Left ventricle myocardium inferior (tissue), 1 donor: ENCODE measurements at regions of chr10 and their contacts with region 1.

Region 1: GRCh38 chr10:70925377-70926225 is 37.2 kb upstream of the PCBD1 start:
- DNase-seq: peak; percentile 49
- H3K4me3 ChIP-seq: no peak overlapping the region
- H3K27ac ChIP-seq: peak overlapping the region; percentile 55
- H3K4me1 ChIP-seq: peaks cover 7% of the 10 kb centered on the region
- H3K27me3 ChIP-seq: no peaks in the 10 kb centered on the region
- CTCF ChIP-seq: peak; percentile 95

Region 2: GRCh38 chr10:71212318-71213126 is 286.9 kb after region 1 on chr10 and contains the start of gene UNC5B:
- intact Hi-C with region 1: loop called (anchors 10 kb)
- DNase-seq: peak; percentile 93
- H3K4me3 ChIP-seq: peak within 1 kb of the TSS; percentile 74
- H3K27ac ChIP-seq: peak within 1 kb of the TSS; percentile 88
- H3K4me1 ChIP-seq: peaks cover 60% of the 10 kb centered on the region
- H3K27me3 ChIP-seq: peaks cover 18% of the 10 kb centered on the region
- CTCF ChIP-seq: peak; percentile 65
- total RNA-seq, gene UNC5B: 15.6 TPM

Region 3: GRCh38 chr10:71285180-71285545 is 359.6 kb after region 1 on chr10:
- intact Hi-C with region 1: loop called (anchors 10 kb)
- DNase-seq: no peak
- H3K4me3 ChIP-seq: no peak overlapping the region
- H3K27ac ChIP-seq: no peak overlapping the region
- H3K4me1 ChIP-seq: peaks cover 5% of the 10 kb centered on the region
- H3K27me3 ChIP-seq: no peaks in the 10 kb centered on the region
- CTCF ChIP-seq: peak; percentile 83